Activated T-helper 1 cell treated with anti-CD3 and anti-CD28 coated beads, Interleukin-12 subunit alpha, Interleukin-12 subunit beta, Interleukin-2, Interleukin-4 antibody, amounts not matched to agents 30 ng/mL and 10 ng/mL and 1 ng/mL, durations not matched to agents 14 hours and 24 hours and 36 hours (primary cell): ENCODE measurements at regions of chr4 and their contacts with region 1.

Region 1: GRCh38 chr4:87032884-87033533 is 98.2 kb downstream of the AFF1 start:
- DNase-seq: no peak
- H3K4me3 Mint-ChIP-seq: no peak overlapping the region
- H3K27ac Mint-ChIP-seq: no peak overlapping the region
- H3K4me1 Mint-ChIP-seq: peaks cover 16% of the 10 kb centered on the region
- H3K27me3 Mint-ChIP-seq: no peaks in the 10 kb centered on the region

Region 2: GRCh38 chr4:87017580-87018342 is 15.2 kb before region 1 on chr4:
- intact Hi-C with region 1: loop called (anchors 2 kb)
- DNase-seq: no peak
- H3K4me3 Mint-ChIP-seq: no peak overlapping the region
- H3K27ac Mint-ChIP-seq: peak overlapping the region; percentile 14
- H3K4me1 Mint-ChIP-seq: peaks cover 81% of the 10 kb centered on the region
- H3K27me3 Mint-ChIP-seq: no peaks in the 10 kb centered on the region